PC-3 (cell line): ENCODE measurements at regions of chr16 and their contacts with region 1.

Region 1: GRCh38 chr16:74998481-74999218 is at the start of gene ZNRF1:
- DNase-seq: peak; percentile 75
- ATAC-seq: peak; percentile 66
- H3K4me3 ChIP-seq: peak within 1 kb of the TSS; percentile 85
- H3K27ac ChIP-seq: peak within 1 kb of the TSS; percentile 97
- H3K4me1 ChIP-seq: peaks cover 41% of the 10 kb centered on the region
- H3K27me3 ChIP-seq: no peaks in the 10 kb centered on the region
- CTCF ChIP-seq: peak; percentile 75
- total RNA-seq, gene ZNRF1: 60.4 and 83.6 TPM in 2 replicates

Region 2: GRCh38 chr16:74936902-74937560 is 61.6 kb before region 1 on chr16:
- CTCF ChIA-PET with region 1: no interaction called
- POLR2A ChIA-PET with region 1: no interaction called
- intact Hi-C with region 1: loop called (anchors 2 kb)
- DNase-seq: peak; percentile 93
- ATAC-seq: peak; percentile 100
- H3K4me3 ChIP-seq: no peak overlapping the region
- H3K27ac ChIP-seq: peak overlapping the region; percentile 99
- H3K4me1 ChIP-seq: peaks cover 22% of the 10 kb centered on the region
- H3K27me3 ChIP-seq: no peaks in the 10 kb centered on the region
- CTCF ChIP-seq: no peak

Region 3: GRCh38 chr16:75148311-75149195 is 149.9 kb after region 1 on chr16 and contains the start of gene ZFP1:
- CTCF ChIA-PET with region 1: no interaction called
- POLR2A ChIA-PET with region 1: no interaction called
- intact Hi-C with region 1: no loop called
- DNase-seq: peak; percentile 87
- ATAC-seq: peak; percentile 90
- H3K4me3 ChIP-seq: peak within 1 kb of the TSS; percentile 98
- H3K27ac ChIP-seq: peak within 1 kb of the TSS; percentile 85
- H3K4me1 ChIP-seq: no peaks in the 10 kb centered on the region
- H3K27me3 ChIP-seq: no peaks in the 10 kb centered on the region
- CTCF ChIP-seq: no peak
- total RNA-seq, gene ZFP1: 3.3 and 3.5 TPM in 2 replicates